ENCODE measurements at regions of chr3 and their contacts with region 1.

Region 1: DNA sequence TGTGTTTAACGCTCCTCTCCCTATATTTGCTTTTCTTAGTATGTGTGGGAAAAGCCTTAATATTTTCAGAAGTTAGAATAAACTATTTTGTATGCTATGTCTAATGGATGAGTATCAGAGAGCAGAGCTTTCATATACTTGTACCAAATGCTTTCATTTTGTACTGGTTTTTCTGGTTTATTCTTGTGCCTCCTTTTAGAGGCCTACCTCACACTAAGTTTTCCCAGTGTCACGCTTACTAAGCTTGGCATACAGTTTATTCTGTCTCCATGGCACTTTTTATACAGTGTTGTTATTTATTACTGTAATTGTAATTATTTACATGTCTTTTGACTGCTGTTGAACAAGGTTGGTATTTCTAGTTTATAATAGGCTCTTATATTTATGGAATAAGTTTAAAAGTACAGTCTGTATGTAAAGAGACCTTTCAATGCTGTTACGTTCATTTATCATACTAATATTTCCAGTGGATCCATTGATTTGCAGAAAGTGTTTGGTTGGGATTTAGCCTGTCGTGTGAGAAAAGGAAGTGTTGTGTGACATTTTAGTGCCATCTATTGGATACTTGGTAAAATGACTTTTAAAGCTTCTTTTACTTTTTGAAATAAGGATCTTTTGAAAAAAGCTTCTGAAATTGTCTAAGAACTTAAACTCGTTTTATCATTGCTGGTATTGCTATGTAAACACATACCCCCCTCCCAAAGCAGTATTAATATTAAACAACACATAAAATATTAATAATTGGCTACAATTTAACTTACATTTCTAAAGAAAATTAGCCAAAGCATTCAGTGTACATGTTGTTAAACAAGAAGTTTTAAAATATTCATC is 5.2 kb upstream of the EBLN2 start:
- DNase-seq: no peak
- ATAC-seq: no peak
- H3K4me3 Mint-ChIP-seq: no peak overlapping the region
- H3K27ac Mint-ChIP-seq: peak overlapping the region; percentile 19
- H3K4me1 Mint-ChIP-seq: peaks cover 28% of the 10 kb centered on the region
- H3K27me3 Mint-ChIP-seq: no peaks in the 10 kb centered on the region

Region 2: GRCh38 chr3:72665701-72666443 is 390.4 kb before region 1 on chr3:
- CTCF ChIA-PET with region 1: no interaction called
- POLR2A ChIA-PET with region 1: no interaction called
- intact Hi-C with region 1: loop called in 1 of 2 experiments (anchors 10 kb)
- DNase-seq: peak; percentile 76
- ATAC-seq: peak; percentile 81
- H3K4me3 Mint-ChIP-seq: no peak overlapping the region
- H3K27ac Mint-ChIP-seq: no peak overlapping the region
- H3K4me1 Mint-ChIP-seq: peaks cover 3% of the 10 kb centered on the region
- H3K27me3 Mint-ChIP-seq: no peaks in the 10 kb centered on the region

Region 3: GRCh38 chr3:72930754-72931153 is 125.5 kb before region 1 on chr3:
- CTCF ChIA-PET with region 1: interaction called, 21 read pairs
- POLR2A ChIA-PET with region 1: no interaction called
- intact Hi-C with region 1: no loop called
- DNase-seq: no peak
- ATAC-seq: no peak
- H3K4me3 Mint-ChIP-seq: no peak overlapping the region
- H3K27ac Mint-ChIP-seq: no peak overlapping the region
- H3K4me1 Mint-ChIP-seq: no peaks in the 10 kb centered on the region
- H3K27me3 Mint-ChIP-seq: no peaks in the 10 kb centered on the region

Region 4: DNA sequence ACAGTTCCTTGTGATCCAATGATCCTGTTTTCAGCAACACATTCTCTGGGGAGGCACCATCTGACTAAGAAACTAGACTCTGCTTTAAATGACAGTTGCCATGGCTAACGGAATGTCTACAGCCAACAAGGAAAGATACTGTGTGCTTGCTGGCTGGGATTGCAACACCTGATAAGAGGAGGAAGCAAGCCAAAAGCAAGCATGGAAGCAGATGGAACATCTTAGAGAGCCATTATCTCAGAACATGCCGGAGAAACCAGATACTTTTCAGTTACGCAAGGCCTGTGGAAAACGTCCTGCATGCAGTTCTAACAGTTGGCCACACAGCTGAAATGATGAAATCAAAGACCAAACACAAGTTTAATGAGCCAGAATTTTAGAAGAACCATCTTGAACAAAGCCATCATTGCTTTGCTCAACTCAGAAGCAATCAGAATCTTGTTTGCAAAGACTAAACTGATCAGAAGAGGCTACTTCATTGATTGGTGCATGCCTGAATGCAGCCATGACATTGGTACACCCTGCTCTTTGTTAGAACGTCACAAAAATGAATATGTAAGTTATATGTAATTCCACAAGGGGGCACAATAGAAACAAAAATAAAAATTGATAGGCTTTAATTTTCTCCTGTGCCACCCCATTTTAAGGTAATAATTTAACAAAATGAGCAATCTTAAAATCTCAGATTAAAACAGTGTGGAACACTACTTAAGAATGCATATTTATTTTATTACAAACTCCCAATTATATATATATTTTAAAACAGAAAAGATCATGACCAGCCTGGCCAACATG is 117.6 kb before region 1 on chr3:
- CTCF ChIA-PET with region 1: interaction called, 163 read pairs
- POLR2A ChIA-PET with region 1: interaction called, 4 read pairs
- intact Hi-C with region 1: loop called (anchors 1 kb)
- DNase-seq: peak; percentile 44
- ATAC-seq: peak; percentile 98
- H3K4me3 Mint-ChIP-seq: no peak overlapping the region
- H3K27ac Mint-ChIP-seq: no peak overlapping the region
- H3K4me1 Mint-ChIP-seq: no peaks in the 10 kb centered on the region
- H3K27me3 Mint-ChIP-seq: no peaks in the 10 kb centered on the region

Region 5: DNA sequence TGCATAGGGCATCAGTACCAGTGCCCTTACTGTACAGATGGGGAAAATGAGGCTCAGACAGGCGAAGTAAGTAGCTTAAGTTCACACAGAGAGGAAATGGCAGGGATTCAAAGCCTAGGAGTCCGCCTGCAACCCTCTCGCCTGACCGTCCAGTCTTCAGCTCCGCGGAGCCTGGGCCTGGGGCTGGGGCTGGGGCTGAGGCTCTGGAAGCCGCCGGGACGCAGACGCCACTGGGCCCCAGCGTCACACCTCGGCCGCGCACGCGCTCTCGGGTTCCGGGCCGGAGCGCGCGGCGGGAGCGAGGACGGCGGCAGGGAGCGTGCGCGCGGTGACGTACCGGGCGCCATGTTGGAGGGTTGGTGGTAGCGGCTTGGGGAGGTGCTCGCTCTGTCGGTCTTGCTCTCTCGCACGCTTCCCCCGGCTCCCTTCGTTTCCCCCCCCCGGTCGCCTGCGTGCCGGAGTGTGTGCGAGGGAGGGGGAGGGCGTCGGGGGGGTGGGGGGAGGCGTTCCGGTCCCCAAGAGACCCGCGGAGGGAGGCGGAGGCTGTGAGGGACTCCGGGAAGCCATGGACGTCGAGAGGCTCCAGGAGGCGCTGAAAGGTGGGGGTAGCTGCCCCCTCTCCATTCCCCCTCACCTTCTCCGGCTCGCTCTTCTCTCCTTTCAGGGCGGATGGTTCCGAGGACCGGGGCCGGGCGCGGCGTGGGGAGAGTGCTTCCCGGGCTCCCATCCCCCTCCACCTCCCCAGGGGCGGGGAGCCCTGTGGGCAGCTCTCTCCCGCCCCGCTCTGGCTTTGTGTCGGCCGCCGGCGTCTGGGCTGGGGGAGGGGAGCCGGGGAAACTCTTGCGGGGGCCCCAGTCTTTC is 59.5 kb before region 1 on chr3 and contains the start of gene PPP4R2:
- CTCF ChIA-PET with region 1: interaction called, 29 read pairs
- POLR2A ChIA-PET with region 1: interaction called, 6 read pairs
- intact Hi-C with region 1: loop called in 1 of 2 experiments (anchors 1 kb)
- DNase-seq: peak; percentile 94
- ATAC-seq: peak; percentile 88
- H3K4me3 Mint-ChIP-seq: peak within 1 kb of the TSS; percentile 85
- H3K27ac Mint-ChIP-seq: peak within 1 kb of the TSS; percentile 93
- H3K4me1 Mint-ChIP-seq: peaks cover 35% of the 10 kb centered on the region
- H3K27me3 Mint-ChIP-seq: no peaks in the 10 kb centered on the region
- total RNA-seq, gene PPP4R2: 75.1 to 91.5 TPM

Region 6: DNA sequence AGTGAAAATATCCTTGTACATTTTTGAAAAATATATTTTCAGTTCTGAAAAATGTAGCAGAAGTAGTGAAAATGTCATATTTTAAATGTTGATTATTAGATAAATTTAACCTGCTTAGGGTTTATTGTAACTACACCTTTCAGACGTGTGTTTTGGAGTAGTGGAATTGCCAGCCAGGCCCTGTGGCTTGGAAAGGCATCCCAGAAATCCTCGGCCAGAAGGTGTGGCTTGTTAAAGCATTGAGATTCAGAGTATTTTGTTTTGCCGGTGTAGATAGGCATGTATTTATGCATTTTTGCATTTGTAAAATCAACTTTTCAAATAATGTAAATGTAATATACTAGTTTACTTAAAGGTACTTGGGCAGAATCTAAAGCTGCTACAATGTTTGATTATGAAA is 12.2 kb after region 1 on chr3:
- CTCF ChIA-PET with region 1: interaction called, 18 read pairs
- POLR2A ChIA-PET with region 1: no interaction called
- intact Hi-C with region 1: no loop called
- DNase-seq: no peak
- ATAC-seq: no peak
- H3K4me3 Mint-ChIP-seq: no peak overlapping the region
- H3K27ac Mint-ChIP-seq: no peak overlapping the region
- H3K4me1 Mint-ChIP-seq: peaks cover 16% of the 10 kb centered on the region
- H3K27me3 Mint-ChIP-seq: no peaks in the 10 kb centered on the region

Region 7: DNA sequence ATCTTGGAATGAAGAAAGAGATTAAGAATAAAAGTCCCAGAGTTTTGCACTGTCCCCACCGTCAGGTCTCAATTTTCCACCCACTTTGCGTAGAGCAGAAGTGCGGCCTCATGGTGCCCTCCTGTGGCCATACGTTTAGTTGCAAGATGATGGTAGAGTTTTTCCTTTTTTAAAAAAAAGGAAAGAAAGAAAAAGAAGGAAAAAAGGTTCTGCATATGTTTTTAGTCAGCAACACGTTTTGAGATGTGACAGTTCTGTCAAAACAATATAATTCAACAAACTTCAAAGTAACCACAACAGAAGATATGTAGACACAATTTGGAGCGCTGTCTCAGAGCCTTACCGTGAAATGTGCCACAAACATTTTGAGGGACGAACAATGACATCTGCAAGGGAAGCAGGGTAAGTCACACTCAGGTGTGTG is 29.9 kb after region 1 on chr3:
- CTCF ChIA-PET with region 1: interaction called, 21 read pairs
- POLR2A ChIA-PET with region 1: no interaction called
- intact Hi-C with region 1: loop called in 1 of 2 experiments (anchors 1 kb)
- DNase-seq: peak; percentile 70
- ATAC-seq: peak; percentile 72
- H3K4me3 Mint-ChIP-seq: no peak overlapping the region
- H3K27ac Mint-ChIP-seq: no peak overlapping the region
- H3K4me1 Mint-ChIP-seq: peaks cover 8% of the 10 kb centered on the region
- H3K27me3 Mint-ChIP-seq: no peaks in the 10 kb centered on the region

Region 8: DNA sequence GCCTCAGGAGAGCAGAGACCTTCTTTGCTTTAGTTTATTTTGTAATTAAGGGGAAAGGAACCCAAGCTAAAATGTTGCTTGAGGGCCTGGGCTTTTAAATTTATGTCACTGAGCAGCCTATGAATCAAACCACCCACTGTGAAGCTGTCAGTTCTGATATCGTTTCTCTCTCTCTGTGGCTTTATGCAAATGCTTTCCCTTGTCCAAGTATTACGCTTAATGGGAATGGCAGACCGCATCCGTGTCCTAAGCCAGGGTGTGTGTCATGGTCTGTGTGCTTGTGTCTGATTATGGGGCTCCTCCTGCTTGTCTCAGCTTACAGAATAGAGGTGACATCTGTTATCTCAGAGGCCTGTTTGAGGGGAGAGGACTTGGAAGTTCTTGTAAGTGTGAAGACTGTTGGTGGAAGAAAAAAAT is 87.6 kb after region 1 on chr3:
- CTCF ChIA-PET with region 1: no interaction called
- POLR2A ChIA-PET with region 1: no interaction called
- intact Hi-C with region 1: no loop called
- DNase-seq: no peak
- ATAC-seq: no peak
- H3K4me3 Mint-ChIP-seq: no peak overlapping the region
- H3K27ac Mint-ChIP-seq: no peak overlapping the region
- H3K4me1 Mint-ChIP-seq: no peaks in the 10 kb centered on the region
- H3K27me3 Mint-ChIP-seq: peaks cover 2% of the 10 kb centered on the region